Heart left ventricle (tissue), 16 donors: ENCODE measurements at regions of chr3 and their contacts with region 1.

Region 1: GRCh38 chr3:57597122-57597923 is at the start of gene ARF4:
- DNase-seq: peak; percentile 99 to 100 (median 100)
- ATAC-seq: peak; percentile 94 to 98 (median 96)
- H3K4me3 ChIP-seq: peak within 1 kb of the TSS; percentile 67 to 96 (median 83)
- H3K27ac ChIP-seq: peak within 1 kb of the TSS; percentile 87 to 99 (median 98)
- H3K4me1 ChIP-seq: peaks cover 7 to 54% (median 49%) of the 10 kb centered on the region in 12 donors
- H3K27me3 ChIP-seq: no peaks in the 10 kb centered on the region
- CTCF ChIP-seq: peak in 7 of 12 donors; percentile 10 to 65 (median 42)
- POLR2A ChIP-seq: peak; percentile 88 to 96
- total RNA-seq, gene ARF4: 56.6 to 99.8 (median 74.6) TPM

Region 2: GRCh38 chr3:57555738-57556458 is 41.4 kb before region 1 on chr3 and contains the start of gene PDE12:
- intact Hi-C with region 1: loop called in 5 of 10 experiments (anchors 1 to 5 kb)
- DNase-seq: peak; percentile 83 to 90 (median 87)
- ATAC-seq: peak; percentile 95 to 96 (median 95)
- H3K4me3 ChIP-seq: peak within 1 kb of the TSS; percentile 46 to 96 (median 88)
- H3K27ac ChIP-seq: peak within 1 kb of the TSS; percentile 60 to 94 (median 90)
- H3K4me1 ChIP-seq: peaks cover 0 to 41% (median 26%) of the 10 kb centered on the region in 12 donors
- H3K27me3 ChIP-seq: no peaks in the 10 kb centered on the region
- CTCF ChIP-seq: peak in 1 of 12 donors; percentile 5
- POLR2A ChIP-seq: peak in 1 of 2 donors; percentile 27
- total RNA-seq, gene PDE12: 8.3 to 14.6 (median 12.8) TPM

Region 3: GRCh38 chr3:57692259-57693147 is 95.2 kb after region 1 on chr3 and contains the start of gene DENND6A:
- intact Hi-C with region 1: loop called in 4 of 10 experiments (anchors 1 to 5 kb)
- DNase-seq: peak; percentile 88 to 99 (median 91)
- ATAC-seq: peak; percentile 91 to 97 (median 96)
- H3K4me3 ChIP-seq: peak within 1 kb of the TSS; percentile 50 to 97 (median 87)
- H3K27ac ChIP-seq: peak within 1 kb of the TSS; percentile 85 to 100 (median 99)
- H3K4me1 ChIP-seq: peaks cover 0 to 53% (median 33%) of the 10 kb centered on the region in 12 donors
- H3K27me3 ChIP-seq: no peaks in the 10 kb centered on the region
- CTCF ChIP-seq: peak in 2 of 12 donors; percentile 6 to 19
- POLR2A ChIP-seq: peak; percentile 70 to 95
- total RNA-seq, gene DENND6A: 12.3 to 27.9 (median 18.6) TPM